Transverse colon (tissue), 4 donors: ENCODE measurements at regions of chr5 and their contacts with region 1.

Region 1: GRCh38 chr5:88680253-88681132 is 202.5 kb downstream of the MEF2C start:
- DNase-seq: peak; percentile 75
- H3K4me3 ChIP-seq: peak overlapping the region; percentile 28 to 49 (median 32)
- H3K27ac ChIP-seq: no peak overlapping the region
- H3K4me1 ChIP-seq: peaks cover 5 to 22% (median 17%) of the 10 kb centered on the region in 4 donors
- H3K27me3 ChIP-seq: peaks cover 98% of the 10 kb centered on the region
- CTCF ChIP-seq: peak; percentile 80 to 98 (median 93)
- EP300 ChIP-seq: no peak
- POLR2A ChIP-seq: no peak

Region 2: GRCh38 chr5:87770601-87771121 is 909.8 kb before region 1 on chr5:
- in situ Hi-C with region 1: loop called in 1 of 4 experiments (anchors 10 kb)
- intact Hi-C with region 1: no loop called
- DNase-seq: no peak
- H3K4me3 ChIP-seq: no peak overlapping the region
- H3K27ac ChIP-seq: no peak overlapping the region
- H3K4me1 ChIP-seq: no peaks in the 10 kb centered on the region
- H3K27me3 ChIP-seq: peaks cover 28% of the 10 kb centered on the region
- CTCF ChIP-seq: no peak
- EP300 ChIP-seq: no peak
- POLR2A ChIP-seq: no peak

Region 3: GRCh38 chr5:87791869-87792268 is 888.6 kb before region 1 on chr5:
- in situ Hi-C with region 1: loop called in 1 of 4 experiments (anchors 10 kb)
- intact Hi-C with region 1: no loop called
- DNase-seq: no peak
- H3K4me3 ChIP-seq: no peak overlapping the region
- H3K27ac ChIP-seq: no peak overlapping the region
- H3K4me1 ChIP-seq: no peaks in the 10 kb centered on the region
- H3K27me3 ChIP-seq: no peaks in the 10 kb centered on the region
- CTCF ChIP-seq: no peak
- EP300 ChIP-seq: no peak
- POLR2A ChIP-seq: no peak

Region 4: GRCh38 chr5:88140856-88141752 is 539.4 kb before region 1 on chr5:
- in situ Hi-C with region 1: loop called in 2 of 4 experiments (anchors 10 kb)
- intact Hi-C with region 1: loop called (anchors 5 kb)
- DNase-seq: peak; percentile 93
- H3K4me3 ChIP-seq: peak overlapping the region; percentile 30 to 62 (median 33)
- H3K27ac ChIP-seq: peak overlapping the region; percentile 1 to 50 (median 46)
- H3K4me1 ChIP-seq: peaks cover 0 to 50% (median 28%) of the 10 kb centered on the region in 4 donors
- H3K27me3 ChIP-seq: peaks cover 82% of the 10 kb centered on the region
- CTCF ChIP-seq: peak in 4 of 5 experiments; percentile 50 to 76 (median 70)
- EP300 ChIP-seq: no peak
- POLR2A ChIP-seq: no peak

Region 5: DNA sequence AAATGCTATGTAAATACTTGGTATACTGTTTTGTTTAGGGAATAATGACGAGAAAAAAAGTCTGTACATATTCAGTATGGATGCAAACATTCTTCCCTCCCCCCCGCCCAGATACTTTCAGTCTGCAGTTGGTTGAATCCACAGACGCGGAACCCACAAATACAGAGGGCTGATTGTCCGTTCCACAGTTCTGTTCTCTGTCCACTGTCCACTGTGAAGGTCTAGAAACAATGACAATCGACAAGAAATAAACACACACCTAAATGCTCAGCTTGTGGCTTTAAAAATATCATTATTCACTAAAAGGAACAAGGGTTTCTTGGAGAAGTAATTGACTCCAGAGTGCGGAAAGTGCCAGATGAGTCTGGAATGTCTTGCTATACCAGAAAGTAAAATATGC is 520.9 kb before region 1 on chr5:
- in situ Hi-C with region 1: no loop called
- intact Hi-C with region 1: no loop called
- DNase-seq: no peak
- H3K4me3 ChIP-seq: no peak overlapping the region
- H3K27ac ChIP-seq: no peak overlapping the region
- H3K4me1 ChIP-seq: no peaks in the 10 kb centered on the region
- H3K27me3 ChIP-seq: peaks cover 4% of the 10 kb centered on the region
- CTCF ChIP-seq: no peak
- EP300 ChIP-seq: no peak
- POLR2A ChIP-seq: no peak

Region 6: GRCh38 chr5:88660947-88661805 is 19.3 kb before region 1 on chr5:
- in situ Hi-C with region 1: no loop called
- intact Hi-C with region 1: no loop called
- DNase-seq: peak; percentile 60
- H3K4me3 ChIP-seq: peak overlapping the region in 3 of 4 donors; percentile 8 to 45 (median 30)
- H3K27ac ChIP-seq: no peak overlapping the region
- H3K4me1 ChIP-seq: peaks cover 0 to 14% (median 10%) of the 10 kb centered on the region in 4 donors
- H3K27me3 ChIP-seq: peaks cover 100% of the 10 kb centered on the region
- CTCF ChIP-seq: no peak
- EP300 ChIP-seq: no peak
- POLR2A ChIP-seq: no peak

Region 7: DNA sequence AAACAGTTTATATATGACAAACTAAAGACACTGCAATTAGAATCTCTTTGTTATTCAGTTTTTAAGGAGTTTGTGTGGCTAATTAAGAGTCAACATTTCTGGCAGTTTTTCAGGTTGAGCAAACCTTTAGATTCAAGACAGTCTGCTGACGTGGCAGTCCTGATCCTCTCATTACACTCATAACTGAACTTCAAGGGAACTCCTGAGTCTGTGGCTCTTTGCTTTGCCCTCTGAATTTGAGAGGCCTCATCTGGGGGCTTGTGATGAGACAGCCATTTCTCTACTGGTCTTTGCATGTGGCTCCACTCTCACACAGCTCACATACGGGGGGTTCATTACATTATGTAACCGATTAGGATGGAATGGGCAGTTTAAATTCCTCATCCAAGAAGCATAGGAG is 385.4 kb after region 1 on chr5:
- in situ Hi-C with region 1: no loop called
- intact Hi-C with region 1: no loop called
- DNase-seq: no peak
- H3K4me3 ChIP-seq: no peak overlapping the region
- H3K27ac ChIP-seq: no peak overlapping the region
- H3K4me1 ChIP-seq: no peaks in the 10 kb centered on the region
- H3K27me3 ChIP-seq: no peaks in the 10 kb centered on the region
- CTCF ChIP-seq: no peak
- EP300 ChIP-seq: no peak
- POLR2A ChIP-seq: no peak